ENCODE measurements at regions of chr21 and their contacts with region 1.

Region 1: GRCh38 chr21:19969156-19969555 is 1029.1 kb upstream of the NCAM2 start:
- DNase-seq: no peak
- ATAC-seq: no peak
- H3K4me3 ChIP-seq: no peak overlapping the region
- H3K27ac ChIP-seq: no peak overlapping the region
- H3K4me1 ChIP-seq: no peaks in the 10 kb centered on the region
- H3K27me3 ChIP-seq: no peaks in the 10 kb centered on the region
- CTCF ChIP-seq: no peak
- POLR2A ChIP-seq: no peak

Region 2: DNA sequence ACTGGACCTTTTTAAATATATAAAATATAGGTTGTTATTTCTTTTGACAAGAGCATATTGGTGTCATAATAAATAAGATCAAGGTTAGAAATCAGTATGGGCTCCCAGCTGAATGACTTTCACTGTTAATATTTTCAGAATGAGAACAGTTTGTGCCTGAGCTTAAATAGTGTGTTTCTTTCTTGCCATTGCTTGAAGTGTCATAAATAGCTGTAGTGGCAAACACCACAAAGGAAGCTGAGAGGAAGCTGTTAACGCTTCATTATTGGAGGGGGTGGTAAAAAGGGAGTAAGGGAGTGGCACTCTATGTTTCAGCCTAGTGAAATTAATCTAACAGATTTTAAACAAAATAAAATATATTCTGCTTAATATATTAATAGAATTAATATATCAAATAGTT is 60.8 kb before region 1 on chr21:
- intact Hi-C with region 1: loop called in 1 of 10 experiments (anchors 10 kb)
- DNase-seq: no peak
- ATAC-seq: peak in 2 of 4 donors; percentile 51 to 58
- H3K4me3 ChIP-seq: no peak overlapping the region
- H3K27ac ChIP-seq: no peak overlapping the region
- H3K4me1 ChIP-seq: no peaks in the 10 kb centered on the region
- H3K27me3 ChIP-seq: no peaks in the 10 kb centered on the region
- CTCF ChIP-seq: no peak
- POLR2A ChIP-seq: no peak

Region 3: DNA sequence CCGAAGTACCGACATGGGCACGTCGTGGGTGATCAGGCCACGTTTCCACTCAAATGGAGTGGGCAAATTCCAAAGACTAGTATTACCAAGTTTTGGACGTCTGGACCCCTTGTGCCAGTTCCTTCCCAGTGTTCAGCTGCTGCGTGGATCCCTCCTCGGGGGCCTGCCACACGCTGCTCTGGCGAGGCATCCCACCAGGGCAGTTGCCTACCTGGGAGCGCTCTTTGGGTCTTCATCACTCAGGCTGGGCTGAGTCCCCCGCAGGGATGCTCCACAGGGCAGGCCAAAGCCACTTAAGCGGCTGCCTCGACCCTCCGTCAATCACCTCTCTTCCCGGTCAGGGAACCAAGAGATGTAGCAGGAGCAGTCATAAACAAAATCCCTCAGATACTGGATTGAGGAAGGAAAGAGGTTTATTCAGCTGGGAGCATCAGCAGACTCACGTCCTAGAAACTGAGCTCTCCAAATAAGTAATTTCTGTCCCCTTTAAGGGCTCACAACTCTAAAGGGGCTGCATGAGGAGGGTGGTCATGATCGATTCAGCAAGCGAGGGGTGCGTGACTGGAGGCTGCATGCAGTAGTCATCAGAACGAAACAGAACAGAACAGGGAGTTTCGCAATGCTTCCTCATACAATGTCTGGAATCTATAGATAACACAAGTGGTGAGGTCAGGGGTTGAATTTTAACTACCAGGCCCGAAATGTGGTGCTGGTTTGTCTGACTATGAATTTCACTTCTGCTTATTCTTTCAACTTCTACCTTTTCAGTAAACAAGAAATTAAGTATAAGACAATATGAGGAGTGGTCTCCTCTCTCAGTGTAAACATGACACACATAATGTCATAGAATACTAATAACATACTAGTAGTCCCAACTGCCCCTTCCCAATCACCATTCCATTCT is 30.5 kb after region 1 on chr21:
- intact Hi-C with region 1: loop called in 1 of 10 experiments (anchors 2 kb)
- DNase-seq: no peak
- ATAC-seq: no peak
- H3K4me3 ChIP-seq: no peak overlapping the region
- H3K27ac ChIP-seq: no peak overlapping the region
- H3K4me1 ChIP-seq: no peaks in the 10 kb centered on the region
- H3K27me3 ChIP-seq: no peaks in the 10 kb centered on the region
- CTCF ChIP-seq: no peak
- POLR2A ChIP-seq: no peak

Measured in heart left ventricle (tissue), 16 donors.